Esophagus squamous epithelium (tissue), 5 donors: ENCODE measurements at regions of chr14 and their contacts with region 1.

Region 1: GRCh38 chr14:61461808-61462275 is 140.5 kb downstream of the PRKCH start:
- DNase-seq: no peak
- H3K4me3 ChIP-seq: no peak overlapping the region
- H3K27ac ChIP-seq: peak overlapping the region in 2 of 4 donors; percentile 3 to 5
- H3K4me1 ChIP-seq: peaks cover 5 to 37% (median 16%) of the 10 kb centered on the region in 3 donors
- H3K27me3 ChIP-seq: no peaks in the 10 kb centered on the region
- CTCF ChIP-seq: peak; percentile 73 to 89 (median 82)
- POLR2A ChIP-seq: no peak

Region 2: DNA sequence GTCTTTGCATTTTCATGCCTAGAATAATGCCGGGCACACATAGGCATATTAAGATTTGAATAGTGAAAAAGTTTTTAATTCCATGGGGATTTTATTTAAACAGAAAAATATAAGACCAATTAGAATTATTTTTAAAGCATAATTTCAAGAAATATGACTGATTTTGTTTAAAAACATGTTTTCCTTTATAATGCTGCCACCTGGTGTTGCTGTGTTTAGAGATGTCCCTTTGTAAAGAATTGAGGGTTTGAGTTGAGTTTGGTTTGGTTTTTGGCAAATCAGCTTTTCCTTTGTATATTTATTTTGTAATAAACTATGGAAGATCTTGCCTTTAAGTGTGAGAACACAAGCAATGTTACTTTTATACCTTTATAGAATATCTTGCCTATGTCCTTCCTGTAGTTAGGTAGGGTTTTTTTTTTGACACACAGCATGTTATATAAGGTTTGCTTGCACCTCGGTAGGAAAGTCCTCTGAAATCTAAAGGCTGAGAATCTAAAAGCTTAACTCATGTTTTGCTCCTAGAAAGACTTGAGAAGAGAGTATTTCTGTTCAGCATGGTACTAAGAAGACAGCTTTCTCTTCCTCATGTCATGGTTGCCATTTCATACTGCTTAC is 269.0 kb after region 1 on chr14:
- intact Hi-C with region 1: loop called (anchors 10 kb)
- DNase-seq: no peak
- H3K4me3 ChIP-seq: no peak overlapping the region
- H3K27ac ChIP-seq: peak overlapping the region in 2 of 4 donors; percentile 2 to 23
- H3K4me1 ChIP-seq: peaks cover 0 to 25% (median 0%) of the 10 kb centered on the region in 3 donors
- H3K27me3 ChIP-seq: no peaks in the 10 kb centered on the region
- CTCF ChIP-seq: peak in 5 of 6 experiments; percentile 38 to 60 (median 48)
- POLR2A ChIP-seq: no peak